ENCODE measurements at regions of chr17 and their contacts with region 1.

Region 1: GRCh38 chr17:45332989-45333701 is 16.3 kb upstream of the MAP3K14 start:
- DNase-seq: peak; percentile 31
- ATAC-seq: peak; percentile 63
- H3K4me3 ChIP-seq: no peak overlapping the region
- H3K27ac ChIP-seq: no peak overlapping the region
- H3K4me1 ChIP-seq: peaks cover 7% of the 10 kb centered on the region; the same call in 1 of the 2 replicates
- H3K27me3 ChIP-seq: no peaks in the 10 kb centered on the region
- CTCF ChIP-seq: no peak

Region 2: GRCh38 chr17:45351831-45352230 is 18.7 kb after region 1 on chr17:
- CTCF ChIA-PET with region 1: no interaction called
- POLR2A ChIA-PET with region 1: no interaction called
- intact Hi-C with region 1: loop called (anchors 2 kb)
- DNase-seq: no peak
- ATAC-seq: no peak
- H3K4me3 ChIP-seq: no peak overlapping the region
- H3K27ac ChIP-seq: no peak overlapping the region
- H3K4me1 ChIP-seq: no peaks in the 10 kb centered on the region
- H3K27me3 ChIP-seq: no peaks in the 10 kb centered on the region
- CTCF ChIP-seq: no peak

Region 3: DNA sequence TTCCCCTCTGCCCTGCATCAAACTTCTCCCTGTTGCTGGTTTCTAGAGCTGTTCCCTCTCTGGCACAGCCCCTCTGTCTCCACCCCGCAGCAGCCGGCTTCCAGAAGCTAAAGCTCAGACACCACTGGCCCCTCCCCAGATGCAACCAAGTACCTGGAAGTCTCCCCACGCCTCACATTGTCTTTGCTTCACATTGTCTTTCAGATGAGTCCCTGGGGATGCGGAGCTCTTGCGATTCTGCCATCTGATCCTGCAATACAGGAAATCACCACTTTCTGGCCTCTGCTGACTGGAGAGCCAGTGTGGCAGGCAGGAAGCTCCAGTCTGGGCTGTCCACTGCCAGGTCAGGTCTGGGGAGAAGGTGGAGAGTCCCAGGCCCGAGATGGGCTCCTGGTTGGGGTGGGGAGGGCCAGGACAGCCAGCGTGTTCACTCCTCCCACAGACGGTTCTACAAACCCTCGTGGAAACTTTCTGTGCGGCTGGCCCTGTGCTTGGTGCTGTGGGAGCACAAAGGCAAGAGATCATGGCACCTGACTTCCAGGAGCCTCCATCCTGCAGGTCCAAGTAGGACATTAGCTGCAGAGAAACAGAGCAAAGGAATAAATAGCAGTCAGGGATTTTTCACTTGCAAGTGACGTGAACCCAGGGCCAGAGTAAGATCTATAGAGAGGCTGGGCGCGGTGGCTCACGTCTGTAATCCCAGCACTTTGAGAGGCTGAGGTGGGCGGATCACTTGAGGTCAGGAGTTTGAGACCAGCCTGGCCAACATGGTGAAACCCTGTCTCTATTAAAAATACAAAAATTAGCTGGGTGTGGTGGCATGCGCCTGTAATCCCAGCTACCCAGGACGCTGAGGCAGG is 31.6 kb after region 1 on chr17:
- CTCF ChIA-PET with region 1: no interaction called
- POLR2A ChIA-PET with region 1: interaction called, 16 read pairs
- intact Hi-C with region 1: no loop called
- DNase-seq: no peak
- ATAC-seq: no peak; the same call in 1 of the 2 replicates
- H3K4me3 ChIP-seq: no peak overlapping the region
- H3K27ac ChIP-seq: no peak overlapping the region
- H3K4me1 ChIP-seq: no peaks in the 10 kb centered on the region
- H3K27me3 ChIP-seq: no peaks in the 10 kb centered on the region
- CTCF ChIP-seq: no peak

Measured in PC-3 (cell line).